Activated naive CD4-positive, alpha-beta T cell treated with anti-CD3 and anti-CD28 coated beads for 36 hours (primary cell): ENCODE measurements at regions of chr9 and their contacts with region 1.

Region 1: GRCh38 chr9:88835038-88835466 is 156.2 kb upstream of the S1PR3 start:
- DNase-seq: no peak
- H3K4me3 Mint-ChIP-seq: no peak overlapping the region
- H3K27ac Mint-ChIP-seq: no peak overlapping the region
- H3K4me1 Mint-ChIP-seq: peaks cover 24% of the 10 kb centered on the region
- H3K27me3 Mint-ChIP-seq: peaks cover 71% of the 10 kb centered on the region

Region 2: GRCh38 chr9:88816141-88816540 is 18.9 kb before region 1 on chr9:
- CTCF ChIA-PET with region 1: no interaction called
- intact Hi-C with region 1: loop called (anchors 2 kb)
- DNase-seq: no peak
- H3K4me3 Mint-ChIP-seq: no peak overlapping the region
- H3K27ac Mint-ChIP-seq: no peak overlapping the region
- H3K4me1 Mint-ChIP-seq: no peaks in the 10 kb centered on the region
- H3K27me3 Mint-ChIP-seq: peaks cover 30% of the 10 kb centered on the region

Region 3: GRCh38 chr9:88922031-88922430 is 87.0 kb after region 1 on chr9:
- CTCF ChIA-PET with region 1: no interaction called
- intact Hi-C with region 1: loop called (anchors 1 kb)
- DNase-seq: peak; percentile 71
- H3K4me3 Mint-ChIP-seq: no peak overlapping the region
- H3K27ac Mint-ChIP-seq: no peak overlapping the region
- H3K4me1 Mint-ChIP-seq: peaks cover 44% of the 10 kb centered on the region
- H3K27me3 Mint-ChIP-seq: peaks cover 3% of the 10 kb centered on the region